BJ (cell line): ENCODE measurements at regions of chr20 and their contacts with region 1.

Region 1: GRCh38 chr20:4195499-4195898 is 180.1 kb upstream of the RNF24 start:
- DNase-seq: no peak
- H3K4me3 ChIP-seq: no peak overlapping the region
- H3K27me3 ChIP-seq: no peaks in the 10 kb centered on the region
- CTCF ChIP-seq: peak; percentile 67

Region 2: DNA sequence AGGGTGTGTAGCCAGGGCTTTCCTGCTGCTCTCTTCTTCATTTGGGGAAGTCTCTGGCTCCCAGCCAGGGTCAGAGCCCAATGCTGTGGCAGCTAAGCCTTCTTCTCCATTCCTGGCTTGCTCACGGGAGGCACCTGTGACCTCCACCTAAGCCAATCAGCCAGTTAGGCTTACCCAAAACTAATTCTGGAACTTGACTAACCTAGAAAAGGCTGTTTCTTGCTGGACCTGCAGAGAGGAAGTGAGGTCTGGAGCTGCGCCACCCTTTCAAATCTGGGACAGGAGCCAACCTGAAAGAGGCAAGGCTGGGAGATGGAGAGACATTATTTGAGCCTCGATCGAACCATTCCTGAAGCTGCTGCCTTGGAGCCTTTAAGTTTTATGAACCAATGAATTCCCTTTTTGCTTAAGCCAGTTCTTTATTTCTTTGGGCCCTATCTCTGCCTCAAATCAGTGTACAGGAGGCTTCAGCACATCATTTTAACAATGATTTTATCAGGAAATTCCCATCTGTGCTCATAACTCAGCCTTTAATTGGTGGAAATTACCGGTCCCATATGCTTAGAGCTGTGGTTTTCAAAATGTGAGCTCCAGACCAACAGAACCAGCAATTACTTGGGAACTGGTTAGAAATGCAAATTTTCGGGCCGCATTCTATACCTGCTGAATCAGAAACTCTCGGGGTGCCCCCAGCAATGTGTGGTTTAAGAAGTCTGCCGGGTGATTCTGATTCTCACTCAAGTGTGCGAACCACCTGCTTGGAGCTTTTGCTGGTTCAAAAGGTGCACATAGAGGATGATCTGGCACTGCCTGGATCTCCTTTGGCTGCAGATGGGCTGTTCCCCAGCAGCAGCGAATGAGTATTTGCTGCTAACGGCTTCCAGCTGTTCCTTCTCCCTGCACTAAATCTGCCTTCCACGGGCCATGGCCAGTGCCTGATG is 82.7 kb before region 1 on chr20:
- CTCF ChIA-PET with region 1: interaction called, 19 read pairs
- POLR2A ChIA-PET with region 1: no interaction called
- DNase-seq: no peak
- H3K4me3 ChIP-seq: no peak overlapping the region
- H3K27me3 ChIP-seq: no peaks in the 10 kb centered on the region
- CTCF ChIP-seq: no peak

Region 3: DNA sequence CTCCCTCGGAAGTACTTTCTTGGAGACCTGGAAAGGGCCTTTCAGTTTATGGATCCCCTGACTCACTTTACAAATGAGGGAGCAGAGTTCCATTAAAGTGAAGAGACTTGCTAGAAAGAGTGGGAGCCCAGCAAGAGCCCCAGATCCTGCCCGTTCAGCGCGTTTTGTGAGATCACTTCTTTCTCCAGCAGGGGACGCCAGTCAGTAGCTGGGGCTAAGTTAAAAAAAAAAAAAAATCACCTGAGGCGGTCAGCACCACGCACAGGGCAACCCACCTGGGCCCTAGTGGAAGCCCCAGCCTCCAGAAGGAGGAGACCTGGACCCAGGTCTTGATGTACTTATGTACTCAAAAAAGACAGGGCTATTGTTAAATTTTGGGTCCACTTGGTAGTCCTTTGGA is 94.4 kb after region 1 on chr20:
- CTCF ChIA-PET with region 1: no interaction called
- POLR2A ChIA-PET with region 1: no interaction called
- DNase-seq: no peak
- H3K4me3 ChIP-seq: no peak overlapping the region
- H3K27me3 ChIP-seq: no peaks in the 10 kb centered on the region
- CTCF ChIP-seq: no peak